ENCODE measurements at regions of chr17 and their contacts with region 1.

Region 1: DNA sequence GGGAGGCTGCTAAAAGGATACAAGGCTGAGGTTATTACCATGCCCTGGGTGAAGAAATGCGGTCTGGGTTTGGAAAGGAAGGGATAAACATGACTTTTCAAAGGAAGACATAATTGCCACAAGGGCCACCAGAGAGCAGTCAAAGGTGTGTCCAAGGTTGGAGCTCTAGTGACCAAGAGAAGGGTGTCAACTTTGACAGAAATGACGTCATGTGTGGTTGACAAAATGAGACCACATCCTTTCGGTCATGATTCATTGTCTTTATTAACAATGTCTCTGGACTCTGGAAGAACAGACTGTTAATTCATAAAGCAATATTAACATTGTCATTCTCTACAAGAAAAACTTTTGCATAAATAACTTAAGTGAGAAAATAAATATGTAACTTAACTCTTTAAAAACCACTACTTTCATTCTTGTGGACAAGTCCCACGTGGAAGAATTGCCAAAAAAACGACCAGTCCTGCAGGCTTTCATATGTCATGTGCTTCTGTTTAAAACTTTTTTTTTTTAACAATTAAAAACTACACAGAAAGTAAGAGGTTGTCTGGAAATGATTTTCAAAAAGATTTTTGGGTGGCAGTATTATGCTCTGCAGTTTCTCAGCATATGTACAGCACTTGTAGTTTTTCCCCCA is 5.0 kb downstream of the SOST start:
- DNase-seq: no peak

Region 2: GRCh38 chr17:43680461-43680860 is 73.2 kb before region 1 on chr17:
- in situ Hi-C with region 1: loop called (anchors 5 kb)
- DNase-seq: no peak

Measured in G401 (cell line).